ENCODE measurements at regions of chr7 and their contacts with region 1.

Region 1: DNA sequence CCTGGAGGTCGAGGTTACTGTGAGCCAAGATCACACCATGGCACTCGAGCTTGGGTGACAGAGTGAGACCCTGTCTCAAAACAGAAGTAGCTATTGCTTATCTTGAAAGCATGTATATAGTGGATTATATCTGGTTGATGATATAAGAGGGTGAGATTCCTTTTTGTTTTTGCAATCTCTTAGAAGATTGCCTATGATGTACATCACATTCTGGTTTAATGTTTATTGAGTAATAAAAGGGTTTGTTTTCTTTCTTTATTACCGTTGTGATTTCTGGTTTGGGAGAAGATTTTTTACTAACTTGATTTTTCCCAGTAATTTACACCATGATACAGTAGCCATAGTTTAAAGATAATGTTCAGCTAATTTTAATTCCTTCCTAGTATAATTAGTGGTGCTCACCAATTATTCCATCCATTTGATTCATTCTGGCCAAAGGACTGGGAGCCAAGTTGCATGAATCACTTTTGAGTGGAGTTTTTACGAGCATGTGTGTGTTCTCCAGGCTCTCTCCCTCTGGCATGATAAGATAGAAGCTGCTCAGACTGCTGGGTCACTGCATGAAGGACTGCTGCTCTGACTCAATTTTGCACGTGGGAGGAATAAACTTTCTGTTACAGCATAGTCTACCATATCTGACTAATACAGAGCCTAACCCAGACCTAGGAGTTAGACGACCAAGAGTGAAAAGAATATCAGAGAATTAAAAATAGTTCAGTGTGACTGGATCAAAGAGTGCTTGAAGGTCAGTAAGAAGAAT is 13.5 kb upstream of the TSPAN13 start:
- DNase-seq: peak; percentile 97
- H3K4me3 ChIP-seq: no peak overlapping the region
- H3K27ac ChIP-seq: peak overlapping the region; percentile 50
- H3K4me1 ChIP-seq: peaks cover 28% of the 10 kb centered on the region
- H3K27me3 ChIP-seq: no peaks in the 10 kb centered on the region
- CTCF ChIP-seq: no peak

Region 2: DNA sequence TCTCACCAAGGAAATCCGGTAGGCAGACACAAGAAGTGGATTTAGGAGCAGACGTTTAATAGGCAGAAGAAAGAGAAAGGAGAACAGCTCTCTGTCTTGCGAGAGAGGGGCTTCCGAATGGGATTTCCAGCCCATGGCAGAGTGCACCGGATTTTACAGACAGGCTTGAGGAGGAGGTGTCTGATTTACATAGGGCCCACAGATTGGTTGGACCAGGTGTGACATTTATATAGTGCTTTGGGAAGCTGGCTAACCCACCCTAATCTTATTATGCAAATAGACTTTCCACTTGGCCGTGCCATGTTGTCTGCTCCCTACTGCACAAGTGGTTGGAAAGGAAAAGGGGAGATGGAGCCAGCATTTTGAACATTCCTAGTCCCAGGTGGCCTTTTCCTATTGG is 152.3 kb before region 1 on chr7:
- CTCF ChIA-PET with region 1: no interaction called
- dilution Hi-C with region 1: no loop called
- in situ Hi-C with region 1: no loop called
- intact Hi-C with region 1: no loop called
- DNase-seq: no peak
- H3K4me3 ChIP-seq: no peak overlapping the region
- H3K27ac ChIP-seq: no peak overlapping the region
- H3K4me1 ChIP-seq: no peaks in the 10 kb centered on the region
- H3K27me3 ChIP-seq: no peaks in the 10 kb centered on the region
- CTCF ChIP-seq: no peak

Region 3: GRCh38 chr7:16801111-16801542 is 61.1 kb after region 1 on chr7:
- CTCF ChIA-PET with region 1: no interaction called
- dilution Hi-C with region 1: no loop called
- in situ Hi-C with region 1: no loop called
- intact Hi-C with region 1: loop called (anchors 5 kb)
- DNase-seq: peak; percentile 90
- H3K4me3 ChIP-seq: no peak overlapping the region
- H3K27ac ChIP-seq: no peak overlapping the region
- H3K4me1 ChIP-seq: peaks cover 22% of the 10 kb centered on the region
- H3K27me3 ChIP-seq: no peaks in the 10 kb centered on the region
- CTCF ChIP-seq: peak; percentile 56 to 62